Activated CD4-positive, alpha-beta memory T cell treated with anti-CD3 and anti-CD28 coated beads, Interleukin-2, amount 10 ng/mL, durations not matched to agents 7 days and 5 days (primary cell): ENCODE measurements at regions of chr20 and their contacts with region 1.

Region 1: GRCh38 chr20:44080646-44081267 is 106.2 kb downstream of the JPH2 start:
- DNase-seq: peak; percentile 81
- H3K4me3 Mint-ChIP-seq: no peak overlapping the region
- H3K27ac Mint-ChIP-seq: no peak overlapping the region
- H3K4me1 Mint-ChIP-seq: peaks cover 6% of the 10 kb centered on the region
- H3K27me3 Mint-ChIP-seq: peaks cover 16% of the 10 kb centered on the region

Region 2: DNA sequence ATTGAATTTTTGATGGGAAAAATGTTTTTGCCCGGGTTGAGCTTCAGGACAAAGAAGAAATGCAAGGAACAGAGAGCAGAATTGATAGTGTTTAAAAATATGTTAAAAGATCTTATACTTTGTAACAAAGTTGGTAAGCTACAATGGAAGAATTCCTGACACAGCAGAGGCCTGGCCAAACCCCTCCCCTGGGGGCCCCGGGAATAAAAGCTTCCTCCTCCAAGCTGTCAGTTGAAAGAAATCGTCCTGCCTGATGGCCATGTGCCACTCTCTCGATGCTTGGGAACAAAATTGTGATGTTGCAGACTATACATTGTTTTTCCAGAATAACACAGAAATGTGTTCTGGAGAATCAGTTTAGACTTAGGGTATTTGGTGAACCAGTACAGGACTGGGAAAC is 180.3 kb before region 1 on chr20:
- CTCF ChIA-PET with region 1: interaction called, 10 read pairs
- POLR2A ChIA-PET with region 1: no interaction called
- DNase-seq: no peak
- H3K4me3 Mint-ChIP-seq: no peak overlapping the region
- H3K27ac Mint-ChIP-seq: no peak overlapping the region
- H3K4me1 Mint-ChIP-seq: no peaks in the 10 kb centered on the region
- H3K27me3 Mint-ChIP-seq: peaks cover 35% of the 10 kb centered on the region

Region 3: GRCh38 chr20:44065401-44066340 is 15.1 kb before region 1 on chr20:
- CTCF ChIA-PET with region 1: no interaction called
- POLR2A ChIA-PET with region 1: no interaction called
- DNase-seq: no peak
- H3K4me3 Mint-ChIP-seq: no peak overlapping the region
- H3K27ac Mint-ChIP-seq: no peak overlapping the region
- H3K4me1 Mint-ChIP-seq: peaks cover 30% of the 10 kb centered on the region
- H3K27me3 Mint-ChIP-seq: peaks cover 58% of the 10 kb centered on the region

Region 4: DNA sequence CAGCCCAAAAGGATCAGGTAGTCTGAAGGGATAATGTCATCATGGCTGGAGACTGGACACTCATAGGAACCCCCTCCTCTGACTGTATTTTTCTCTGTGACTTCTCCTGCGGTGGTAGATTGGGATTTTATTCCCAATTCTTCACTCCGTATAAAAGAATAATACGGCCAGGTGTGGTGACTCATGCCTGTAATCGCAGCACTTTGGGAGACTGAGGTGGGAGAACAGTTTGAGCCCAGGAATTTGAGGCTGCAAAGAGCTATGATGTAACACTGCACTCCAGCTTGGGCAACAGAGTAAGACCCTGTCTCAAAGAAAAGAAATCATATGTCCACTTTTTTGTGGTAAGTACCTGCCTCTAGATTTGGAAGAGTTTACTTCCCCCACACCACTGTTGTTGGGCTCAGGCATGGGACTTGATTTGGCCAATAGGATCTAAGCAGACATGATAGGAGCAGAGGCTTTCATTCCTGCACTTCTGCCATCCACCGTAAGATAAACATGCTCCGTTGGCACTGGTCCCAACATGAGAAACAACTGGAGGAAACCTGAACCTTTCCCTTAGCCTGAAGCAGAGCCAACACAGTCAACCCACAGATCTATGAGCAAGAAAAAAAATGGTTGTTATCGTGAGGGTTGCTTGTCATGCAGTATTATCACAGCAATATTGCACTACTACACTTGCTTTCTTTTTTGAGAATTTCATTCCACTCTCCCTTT is 24.2 kb after region 1 on chr20:
- CTCF ChIA-PET with region 1: no interaction called
- POLR2A ChIA-PET with region 1: no interaction called
- DNase-seq: no peak
- H3K4me3 Mint-ChIP-seq: no peak overlapping the region
- H3K27ac Mint-ChIP-seq: no peak overlapping the region
- H3K4me1 Mint-ChIP-seq: no peaks in the 10 kb centered on the region
- H3K27me3 Mint-ChIP-seq: peaks cover 71% of the 10 kb centered on the region

Region 5: DNA sequence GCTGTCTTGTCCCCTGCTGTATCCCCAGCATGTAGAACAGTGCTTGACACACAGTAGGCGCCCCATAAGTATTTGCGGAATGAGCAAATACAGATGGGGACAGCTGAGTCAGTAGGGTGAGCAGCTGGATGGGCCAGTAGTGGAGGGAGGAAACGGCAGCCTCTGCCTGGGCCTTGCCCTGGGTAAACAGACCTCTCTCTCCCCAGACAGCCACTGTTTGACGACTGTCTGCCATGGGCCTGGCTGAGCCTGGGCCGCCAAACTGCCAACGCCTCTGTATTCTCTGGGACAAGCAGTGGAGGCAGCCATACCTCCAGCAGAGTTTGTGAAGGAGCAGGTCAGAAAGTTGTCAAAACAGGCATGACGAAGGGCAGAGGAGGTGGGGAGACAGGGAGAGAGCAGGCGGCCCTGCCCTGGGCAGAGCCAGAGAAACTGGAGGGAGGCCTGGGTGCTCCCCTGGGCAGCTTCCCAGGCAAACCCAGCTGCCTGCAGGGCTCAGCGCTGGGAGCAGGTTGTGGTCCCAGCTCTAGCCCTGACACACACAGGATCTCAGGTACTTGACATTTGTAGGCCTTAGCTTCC is 290.0 kb after region 1 on chr20:
- CTCF ChIA-PET with region 1: no interaction called
- POLR2A ChIA-PET with region 1: no interaction called
- DNase-seq: no peak
- H3K4me3 Mint-ChIP-seq: no peak overlapping the region
- H3K27ac Mint-ChIP-seq: no peak overlapping the region
- H3K4me1 Mint-ChIP-seq: no peaks in the 10 kb centered on the region
- H3K27me3 Mint-ChIP-seq: peaks cover 6% of the 10 kb centered on the region